ENCODE measurements at regions of chr14 and their contacts with region 1.

Region 1: DNA sequence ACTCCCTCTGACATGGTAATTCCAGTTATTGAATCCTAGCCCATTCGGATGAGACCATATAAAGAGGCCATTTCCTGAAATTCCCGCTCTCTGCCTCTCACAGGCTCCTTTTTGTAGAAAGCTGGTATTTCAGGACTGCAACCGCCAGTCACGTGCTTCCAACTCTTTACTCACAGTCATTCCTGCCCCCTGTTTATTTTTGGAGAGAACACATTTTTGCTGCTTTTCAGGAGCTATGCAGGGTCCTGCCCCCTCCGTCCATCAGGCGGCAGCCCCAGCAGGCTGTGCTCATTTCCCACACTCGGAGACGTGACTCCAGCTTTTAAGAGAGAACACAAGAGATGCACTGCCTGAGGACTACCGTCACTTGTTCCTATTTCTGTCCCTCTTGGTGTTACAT is 26.8 kb downstream of the IFT43 start:
- DNase-seq: peak; percentile 36 to 92
- H3K4me3 ChIP-seq: peak overlapping the region in 1 of 2 donors; percentile 1
- H3K27ac ChIP-seq: peak overlapping the region; percentile 86 to 95
- H3K4me1 ChIP-seq: peaks cover 0 to 19% of the 10 kb centered on the region in 2 donors
- H3K27me3 ChIP-seq: no peaks in the 10 kb centered on the region
- CTCF ChIP-seq: peak in 2 of 3 experiments; percentile 21 to 32

Region 2: DNA sequence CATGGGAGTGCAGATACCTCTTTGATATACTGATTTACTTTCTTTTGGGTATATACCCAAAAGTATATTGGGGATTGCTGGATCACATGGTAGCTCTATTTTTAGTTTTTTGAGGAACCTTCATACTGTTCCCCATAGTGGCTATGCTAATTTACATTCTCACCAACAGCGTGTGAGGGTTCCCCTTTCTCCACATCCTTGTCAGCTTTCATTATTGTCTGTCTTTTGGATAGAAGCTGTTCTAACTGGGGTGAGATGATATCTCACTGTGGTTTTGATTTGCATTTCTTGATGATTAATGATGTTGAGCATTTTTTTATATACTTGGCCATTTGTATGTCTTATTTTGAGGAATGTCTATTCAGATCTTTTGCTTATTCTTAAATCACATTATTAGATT is 628.6 kb before region 1 on chr14:
- intact Hi-C with region 1: no loop called
- DNase-seq: no peak
- H3K4me3 ChIP-seq: no peak overlapping the region
- H3K27ac ChIP-seq: no peak overlapping the region
- H3K4me1 ChIP-seq: peaks cover 0 to 6% of the 10 kb centered on the region in 2 donors
- H3K27me3 ChIP-seq: no peaks in the 10 kb centered on the region
- CTCF ChIP-seq: no peak

Region 3: DNA sequence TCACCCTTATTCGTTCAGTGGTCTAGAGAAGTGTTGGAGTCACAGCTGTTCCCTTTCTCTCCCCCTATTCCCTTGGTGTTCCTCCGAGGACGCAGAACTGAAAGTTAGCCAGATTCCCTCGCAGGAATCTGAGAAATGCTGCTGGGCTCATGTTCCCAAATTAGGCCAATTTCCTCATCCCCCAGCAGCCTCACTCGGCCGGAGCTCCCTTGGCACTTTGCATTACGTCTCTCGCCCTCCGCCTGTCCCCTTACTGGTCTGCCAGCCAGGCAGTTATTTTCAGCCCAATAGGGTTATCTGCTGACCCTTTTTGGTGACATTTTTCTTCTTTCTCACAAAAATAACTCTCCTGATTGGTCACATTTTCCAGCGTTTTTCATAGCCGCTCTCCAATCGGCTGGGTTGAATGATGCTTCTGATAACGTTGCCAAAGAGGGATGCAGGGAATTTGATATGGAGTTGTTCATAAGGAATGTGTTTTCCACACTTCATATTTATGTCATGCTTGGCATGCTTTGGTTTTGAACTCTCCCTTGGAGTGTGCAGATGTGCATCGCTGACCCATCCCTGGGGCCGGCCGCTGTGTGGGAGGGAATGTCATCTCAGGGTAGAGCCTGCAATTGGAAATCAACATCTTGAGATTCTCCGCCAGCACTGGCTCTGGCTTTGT is 16.8 kb before region 1 on chr14:
- intact Hi-C with region 1: loop called (anchors 1 kb)
- DNase-seq: peak; percentile 51 to 97
- H3K4me3 ChIP-seq: peak overlapping the region in 1 of 2 donors; percentile 37
- H3K27ac ChIP-seq: peak overlapping the region; percentile 87 to 100
- H3K4me1 ChIP-seq: peaks cover 8 to 46% of the 10 kb centered on the region in 2 donors
- H3K27me3 ChIP-seq: no peaks in the 10 kb centered on the region
- CTCF ChIP-seq: no peak

Region 4: GRCh38 chr14:76034566-76034965 is 22.2 kb after region 1 on chr14:
- intact Hi-C with region 1: no loop called
- DNase-seq: no peak
- H3K4me3 ChIP-seq: no peak overlapping the region
- H3K27ac ChIP-seq: no peak overlapping the region
- H3K4me1 ChIP-seq: no peaks in the 10 kb centered on the region
- H3K27me3 ChIP-seq: no peaks in the 10 kb centered on the region
- CTCF ChIP-seq: no peak

Region 5: DNA sequence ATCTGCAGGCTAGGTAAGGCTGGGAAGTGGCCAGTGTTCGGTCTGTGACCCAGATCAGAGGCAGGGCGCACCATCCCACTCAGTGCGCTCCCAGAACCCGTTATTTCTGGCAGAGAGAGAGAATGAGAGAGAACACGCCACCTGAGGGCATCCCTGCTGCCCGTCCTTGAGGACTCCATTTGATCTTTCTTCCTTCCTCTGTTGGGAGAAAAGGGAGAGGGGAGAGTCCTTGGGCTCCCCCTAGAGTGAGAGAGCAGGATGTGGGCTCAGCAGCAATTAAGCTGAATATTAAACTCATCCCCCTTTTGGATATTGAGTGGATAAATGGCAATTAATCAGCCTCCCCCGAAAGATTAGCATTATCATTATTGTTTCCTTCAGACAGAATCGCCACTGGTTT is 43.8 kb after region 1 on chr14:
- intact Hi-C with region 1: no loop called
- DNase-seq: no peak
- H3K4me3 ChIP-seq: no peak overlapping the region
- H3K27ac ChIP-seq: no peak overlapping the region
- H3K4me1 ChIP-seq: no peaks in the 10 kb centered on the region
- H3K27me3 ChIP-seq: no peaks in the 10 kb centered on the region
- CTCF ChIP-seq: peak in 1 of 3 experiments; percentile 28

Region 6: GRCh38 chr14:76151398-76152339 is 139.3 kb after region 1 on chr14 and contains the start of gene GPATCH2L:
- intact Hi-C with region 1: loop called (anchors 10 kb)
- DNase-seq: peak; percentile 85 to 98
- H3K4me3 ChIP-seq: peak within 1 kb of the TSS; percentile 91 to 96
- H3K27ac ChIP-seq: peak within 1 kb of the TSS; percentile 83 to 87
- H3K4me1 ChIP-seq: peaks cover 8 to 27% of the 10 kb centered on the region in 2 donors
- H3K27me3 ChIP-seq: no peaks in the 10 kb centered on the region
- CTCF ChIP-seq: no peak
- total RNA-seq, gene GPATCH2L: 40.3 TPM

Region 7: DNA sequence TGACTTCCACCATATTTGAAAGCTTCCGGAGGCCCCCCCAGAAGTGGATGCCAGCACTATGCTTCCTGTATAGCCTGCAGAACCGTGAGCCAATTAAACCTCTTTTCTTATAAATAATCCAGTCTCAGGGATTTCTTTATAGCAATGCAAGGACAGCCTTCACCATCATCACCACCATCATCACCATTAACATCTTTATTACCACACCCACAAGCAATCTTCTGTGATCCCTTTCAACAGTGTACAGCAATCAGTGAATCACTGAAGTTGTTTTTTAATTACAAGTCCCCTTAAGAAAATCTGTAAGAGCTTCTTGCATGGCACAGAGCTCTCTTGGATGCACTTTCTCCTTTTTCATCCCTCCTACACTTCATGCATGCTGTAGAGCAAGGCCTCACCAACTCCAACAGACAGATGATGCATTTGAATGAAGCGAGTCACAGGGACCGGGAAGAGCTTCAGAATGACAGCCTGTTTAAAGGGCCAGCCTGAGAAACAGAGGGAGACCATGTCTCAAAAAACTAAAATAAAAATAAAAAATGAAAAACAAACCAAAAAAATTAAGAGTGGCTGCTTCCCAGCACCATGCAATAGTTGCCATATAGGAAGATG is 665.3 kb after region 1 on chr14:
- intact Hi-C with region 1: no loop called
- DNase-seq: no peak
- H3K4me3 ChIP-seq: no peak overlapping the region
- H3K27ac ChIP-seq: no peak overlapping the region
- H3K4me1 ChIP-seq: no peaks in the 10 kb centered on the region
- H3K27me3 ChIP-seq: no peaks in the 10 kb centered on the region
- CTCF ChIP-seq: no peak

Measured in ascending aorta (tissue), 2 donors.